ENCODE measurements at regions of chr7 and their contacts with region 1.

Region 1: GRCh38 chr7:47882635-47883034 is 65.6 kb downstream of the PKD1L1 start:
- DNase-seq: no peak
- H3K4me3 ChIP-seq: no peak overlapping the region
- H3K27ac ChIP-seq: no peak overlapping the region
- H3K4me1 ChIP-seq: no peaks in the 10 kb centered on the region
- H3K27me3 ChIP-seq: peaks cover 4% of the 10 kb centered on the region
- CTCF ChIP-seq: no peak

Region 2: DNA sequence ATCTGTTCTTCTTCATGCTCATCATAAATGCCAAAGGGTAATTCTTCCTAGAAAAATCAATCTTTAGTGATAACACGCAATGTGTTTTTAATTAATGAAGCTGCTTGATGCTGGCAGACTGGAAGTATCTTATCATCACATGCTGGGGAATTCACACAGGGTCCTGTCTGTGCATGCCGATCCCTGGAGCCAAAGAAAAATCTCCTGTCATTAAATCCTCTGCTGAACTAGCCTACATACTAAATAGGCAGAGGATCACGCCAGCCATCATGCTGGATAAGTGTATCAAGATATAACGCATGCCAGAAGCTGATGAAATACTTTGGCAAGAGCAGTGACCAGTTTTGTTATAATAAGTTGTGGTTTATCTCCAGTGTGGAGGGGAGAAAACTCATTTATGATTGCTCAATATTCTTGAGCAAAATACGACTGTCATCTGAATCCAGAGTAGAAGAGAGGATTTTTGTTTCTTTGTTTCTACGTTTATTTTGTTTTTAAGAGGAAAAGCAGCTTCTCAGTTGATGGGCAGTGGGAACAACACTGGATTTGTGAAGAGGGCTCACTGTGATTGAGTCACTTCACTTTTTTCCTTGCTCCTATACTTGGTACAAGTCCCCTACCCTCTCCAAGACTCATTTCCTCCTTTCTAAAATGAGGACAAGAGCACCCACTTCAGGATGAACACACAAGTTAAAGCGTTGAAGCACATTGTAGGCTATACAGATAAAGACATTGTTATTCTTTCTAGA is 949.8 kb before region 1 on chr7:
- CTCF ChIA-PET with region 1: no interaction called
- dilution Hi-C with region 1: no loop called
- in situ Hi-C with region 1: no loop called
- intact Hi-C with region 1: no loop called
- DNase-seq: peak; percentile 92
- H3K4me3 ChIP-seq: peak overlapping the region in 2 of 3 experiments; percentile 18 to 25
- H3K27ac ChIP-seq: peak overlapping the region; percentile 95
- H3K4me1 ChIP-seq: peaks cover 36% of the 10 kb centered on the region
- H3K27me3 ChIP-seq: no peaks in the 10 kb centered on the region
- CTCF ChIP-seq: peak; percentile 41 to 55

Region 3: GRCh38 chr7:47792521-47793121 is 90.0 kb before region 1 on chr7:
- CTCF ChIA-PET with region 1: no interaction called
- dilution Hi-C with region 1: loop called (anchors 5 kb)
- in situ Hi-C with region 1: no loop called
- intact Hi-C with region 1: no loop called
- DNase-seq: no peak
- H3K4me3 ChIP-seq: no peak overlapping the region
- H3K27ac ChIP-seq: no peak overlapping the region
- H3K4me1 ChIP-seq: peaks cover 4% of the 10 kb centered on the region
- H3K27me3 ChIP-seq: no peaks in the 10 kb centered on the region
- CTCF ChIP-seq: peak; percentile 41 to 55

Region 4: DNA sequence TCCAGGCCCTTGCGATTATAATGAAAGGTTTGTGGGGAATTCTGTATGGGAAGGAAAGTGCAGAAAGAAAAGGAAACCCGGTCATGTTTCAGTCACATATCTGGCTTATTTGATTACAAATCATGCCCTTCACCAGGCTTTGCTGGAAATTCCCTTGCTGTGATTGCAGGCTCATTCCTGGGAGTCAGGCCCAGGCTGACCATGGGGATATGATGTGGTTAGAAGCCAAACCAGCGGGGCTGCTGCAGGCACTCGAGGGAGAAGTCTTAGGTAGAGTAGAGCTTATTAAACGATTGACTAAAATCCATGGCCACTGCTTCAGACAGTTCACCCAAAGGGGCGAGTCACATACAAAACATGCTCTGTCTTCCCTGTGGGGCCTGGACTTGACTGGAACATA is 49.4 kb after region 1 on chr7:
- CTCF ChIA-PET with region 1: no interaction called
- dilution Hi-C with region 1: loop called (anchors 5 kb)
- in situ Hi-C with region 1: no loop called
- intact Hi-C with region 1: no loop called
- DNase-seq: peak; percentile 29
- H3K4me3 ChIP-seq: no peak overlapping the region
- H3K27ac ChIP-seq: no peak overlapping the region
- H3K4me1 ChIP-seq: no peaks in the 10 kb centered on the region
- H3K27me3 ChIP-seq: no peaks in the 10 kb centered on the region
- CTCF ChIP-seq: no peak

Region 5: DNA sequence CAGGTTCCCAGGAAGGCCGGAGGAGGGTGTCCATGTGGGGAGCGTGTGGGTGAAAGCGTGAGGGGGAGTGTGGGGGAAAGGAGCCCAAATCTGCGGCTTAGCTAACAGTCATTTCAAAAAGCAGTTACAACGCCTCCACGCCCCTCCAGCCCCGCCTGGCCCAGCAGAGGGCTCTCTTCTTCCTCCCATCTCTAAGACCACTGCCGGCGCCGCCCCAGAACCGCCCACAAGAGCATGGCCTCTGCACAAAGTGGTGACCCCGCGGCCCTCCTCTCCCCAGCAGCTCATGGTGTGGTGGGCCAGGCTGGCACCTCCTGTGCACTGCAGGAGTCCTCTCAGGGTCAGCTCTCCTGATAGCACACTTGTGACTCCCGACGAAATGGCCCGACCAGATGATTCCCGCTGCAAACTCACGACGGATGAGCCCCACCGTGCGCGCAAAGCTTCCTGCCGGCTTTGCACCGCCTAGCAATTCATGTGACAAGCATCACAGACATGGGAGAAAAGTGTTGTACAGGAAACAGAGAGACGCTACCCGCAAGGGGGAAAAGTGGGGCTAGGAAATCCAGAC is 109.2 kb after region 1 on chr7:
- CTCF ChIA-PET with region 1: no interaction called
- dilution Hi-C with region 1: no loop called
- in situ Hi-C with region 1: no loop called
- intact Hi-C with region 1: no loop called
- DNase-seq: peak; percentile 52
- H3K4me3 ChIP-seq: peak overlapping the region; percentile 34 to 52 (median 35)
- H3K27ac ChIP-seq: no peak overlapping the region
- H3K4me1 ChIP-seq: peaks cover 7% of the 10 kb centered on the region
- H3K27me3 ChIP-seq: no peaks in the 10 kb centered on the region
- CTCF ChIP-seq: peak; percentile 32 to 62

Region 6: GRCh38 chr7:48015308-48015707 is 132.7 kb after region 1 on chr7:
- CTCF ChIA-PET with region 1: no interaction called
- dilution Hi-C with region 1: no loop called
- in situ Hi-C with region 1: no loop called
- intact Hi-C with region 1: no loop called
- DNase-seq: no peak
- H3K4me3 ChIP-seq: no peak overlapping the region
- H3K27ac ChIP-seq: no peak overlapping the region
- H3K4me1 ChIP-seq: no peaks in the 10 kb centered on the region
- H3K27me3 ChIP-seq: no peaks in the 10 kb centered on the region
- CTCF ChIP-seq: no peak

Measured in mammary epithelial cell (primary cell).